ENCODE measurements at regions of chr16 and their contacts with region 1.

Region 1: GRCh38 chr16:30874821-30875717 is 18.8 kb downstream of the BCL7C start:
- DNase-seq: peak; percentile 73 to 94 (median 88)
- ATAC-seq: peak; percentile 80
- H3K4me3 ChIP-seq: peak overlapping the region; percentile 98
- H3K4me3 Mint-ChIP-seq: peak overlapping the region; percentile 96
- H3K27ac ChIP-seq: peak overlapping the region; percentile 88 to 93
- H3K27ac Mint-ChIP-seq: peak overlapping the region; percentile 98
- H3K4me1 ChIP-seq: peaks cover 37% of the 10 kb centered on the region
- H3K4me1 Mint-ChIP-seq: peaks cover 30% of the 10 kb centered on the region
- H3K27me3 ChIP-seq: no peaks in the 10 kb centered on the region
- H3K27me3 Mint-ChIP-seq: no peaks in the 10 kb centered on the region
- CTCF ChIP-seq: no peak

Region 2: GRCh38 chr16:30805370-30806169 is 69.5 kb before region 1 on chr16:
- CTCF ChIA-PET with region 1: no interaction called
- POLR2A ChIA-PET with region 1: interaction called, 27 read pairs
- intact Hi-C with region 1: loop called in 1 of 2 experiments (anchors 1 kb)
- DNase-seq: peak; percentile 28 to 77 (median 56)
- ATAC-seq: peak; percentile 74
- H3K4me3 ChIP-seq: peak overlapping the region; percentile 87
- H3K4me3 Mint-ChIP-seq: peak overlapping the region; percentile 87
- H3K27ac ChIP-seq: peak overlapping the region; percentile 38 to 59
- H3K27ac Mint-ChIP-seq: peak overlapping the region; percentile 52
- H3K4me1 ChIP-seq: peaks cover 21% of the 10 kb centered on the region
- H3K4me1 Mint-ChIP-seq: peaks cover 18% of the 10 kb centered on the region
- H3K27me3 ChIP-seq: no peaks in the 10 kb centered on the region
- H3K27me3 Mint-ChIP-seq: no peaks in the 10 kb centered on the region
- CTCF ChIP-seq: no peak

Region 3: DNA sequence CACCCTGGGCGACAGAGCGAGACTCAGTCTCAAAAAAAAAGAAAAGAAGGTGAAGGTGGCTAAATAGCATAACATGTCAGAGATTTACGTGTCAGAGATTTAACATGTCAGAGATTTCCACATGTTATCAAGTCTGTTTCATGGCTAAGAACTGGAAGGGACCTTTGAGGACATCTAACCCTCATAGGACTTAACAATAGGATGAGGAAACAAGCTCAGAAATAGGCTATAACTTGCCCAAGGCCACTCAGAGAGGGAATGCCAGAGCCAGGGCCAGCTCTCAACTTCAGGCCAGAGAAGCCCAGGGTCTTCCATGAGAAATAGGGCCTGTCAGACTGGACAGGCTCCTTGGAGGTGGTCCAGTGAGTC is 61.3 kb before region 1 on chr16:
- CTCF ChIA-PET with region 1: interaction called, 3 read pairs
- POLR2A ChIA-PET with region 1: interaction called, 17 read pairs
- intact Hi-C with region 1: no loop called
- DNase-seq: no peak
- ATAC-seq: peak; percentile 8
- H3K4me3 ChIP-seq: peak overlapping the region; percentile 65
- H3K4me3 Mint-ChIP-seq: peak overlapping the region; percentile 85
- H3K27ac ChIP-seq: peak overlapping the region; percentile 26 to 64
- H3K27ac Mint-ChIP-seq: peak overlapping the region; percentile 81
- H3K4me1 ChIP-seq: peaks cover 17% of the 10 kb centered on the region
- H3K4me1 Mint-ChIP-seq: peaks cover 15% of the 10 kb centered on the region
- H3K27me3 ChIP-seq: no peaks in the 10 kb centered on the region
- H3K27me3 Mint-ChIP-seq: no peaks in the 10 kb centered on the region
- CTCF ChIP-seq: no peak

Region 4: GRCh38 chr16:30844671-30845449 is 30.2 kb before region 1 on chr16:
- CTCF ChIA-PET with region 1: interaction called, 25 read pairs
- POLR2A ChIA-PET with region 1: interaction called, 28 read pairs
- intact Hi-C with region 1: loop called in 1 of 2 experiments (anchors 1 kb)
- DNase-seq: peak; percentile 52 to 93 (median 79)
- ATAC-seq: peak; percentile 96
- H3K4me3 ChIP-seq: no peak overlapping the region
- H3K4me3 Mint-ChIP-seq: peak overlapping the region; percentile 52
- H3K27ac ChIP-seq: no peak overlapping the region
- H3K27ac Mint-ChIP-seq: peak overlapping the region; percentile 24
- H3K4me1 ChIP-seq: peaks cover 8% of the 10 kb centered on the region
- H3K4me1 Mint-ChIP-seq: peaks cover 11% of the 10 kb centered on the region
- H3K27me3 ChIP-seq: no peaks in the 10 kb centered on the region
- H3K27me3 Mint-ChIP-seq: no peaks in the 10 kb centered on the region
- CTCF ChIP-seq: peak; percentile 91

Region 5: GRCh38 chr16:30858829-30859423 is 16.1 kb before region 1 on chr16:
- CTCF ChIA-PET with region 1: no interaction called
- POLR2A ChIA-PET with region 1: no interaction called
- intact Hi-C with region 1: loop called in 1 of 2 experiments (anchors 2 kb)
- DNase-seq: no peak
- ATAC-seq: no peak
- H3K4me3 ChIP-seq: no peak overlapping the region
- H3K4me3 Mint-ChIP-seq: no peak overlapping the region
- H3K27ac ChIP-seq: no peak overlapping the region
- H3K27ac Mint-ChIP-seq: no peak overlapping the region
- H3K4me1 ChIP-seq: no peaks in the 10 kb centered on the region
- H3K4me1 Mint-ChIP-seq: no peaks in the 10 kb centered on the region
- H3K27me3 ChIP-seq: no peaks in the 10 kb centered on the region
- H3K27me3 Mint-ChIP-seq: no peaks in the 10 kb centered on the region
- CTCF ChIP-seq: no peak

Region 6: GRCh38 chr16:30893744-30894539 is 18.9 kb after region 1 on chr16 and contains the start of gene BCL7C:
- CTCF ChIA-PET with region 1: interaction called, 3 read pairs
- POLR2A ChIA-PET with region 1: interaction called, 11 read pairs
- intact Hi-C with region 1: loop called (anchors 1 to 2 kb)
- DNase-seq: peak; percentile 51 to 89 (median 74)
- ATAC-seq: peak; percentile 72
- H3K4me3 ChIP-seq: peak within 1 kb of the TSS; percentile 88
- H3K4me3 Mint-ChIP-seq: peak within 1 kb of the TSS; percentile 88
- H3K27ac ChIP-seq: peak within 1 kb of the TSS; percentile 73 to 85
- H3K27ac Mint-ChIP-seq: peak within 1 kb of the TSS; percentile 72
- H3K4me1 ChIP-seq: peaks cover 45% of the 10 kb centered on the region
- H3K4me1 Mint-ChIP-seq: peaks cover 49% of the 10 kb centered on the region
- H3K27me3 ChIP-seq: no peaks in the 10 kb centered on the region
- H3K27me3 Mint-ChIP-seq: no peaks in the 10 kb centered on the region
- CTCF ChIP-seq: no peak
- total RNA-seq, gene BCL7C: 17.8 to 19.1 TPM

Region 7: GRCh38 chr16:30902029-30902972 is 27.2 kb after region 1 on chr16:
- CTCF ChIA-PET with region 1: interaction called, 47 read pairs
- POLR2A ChIA-PET with region 1: interaction called, 93 read pairs
- intact Hi-C with region 1: loop called in 1 of 2 experiments (anchors 1 kb)
- DNase-seq: peak in 12 of 14 experiments; percentile 25 to 83 (median 52)
- ATAC-seq: peak; percentile 85
- H3K4me3 ChIP-seq: peak overlapping the region; percentile 58
- H3K4me3 Mint-ChIP-seq: peak overlapping the region; percentile 97
- H3K27ac ChIP-seq: peak overlapping the region; percentile 67 to 81
- H3K27ac Mint-ChIP-seq: peak overlapping the region; percentile 87
- H3K4me1 ChIP-seq: peaks cover 44% of the 10 kb centered on the region
- H3K4me1 Mint-ChIP-seq: peaks cover 32% of the 10 kb centered on the region
- H3K27me3 ChIP-seq: no peaks in the 10 kb centered on the region
- H3K27me3 Mint-ChIP-seq: no peaks in the 10 kb centered on the region
- CTCF ChIP-seq: no peak

Measured in CD4-positive, alpha-beta T cell (primary cell).